A673 (cell line): ENCODE measurements at regions of chr14 and their contacts with region 1.

Region 1: GRCh38 chr14:68341411-68342212 is 451.3 kb downstream of the ZFP36L1 start:
- DNase-seq: peak; percentile 61
- H3K4me3 ChIP-seq: no peak overlapping the region
- H3K27ac ChIP-seq: peak overlapping the region; percentile 26
- H3K4me1 ChIP-seq: peaks cover 20% of the 10 kb centered on the region
- H3K27me3 ChIP-seq: no peaks in the 10 kb centered on the region
- CTCF ChIP-seq: no peak

Region 2: GRCh38 chr14:69055999-69056788 is 714.6 kb after region 1 on chr14:
- CTCF ChIA-PET with region 1: no interaction called
- POLR2A ChIA-PET with region 1: interaction called, 15 read pairs
- intact Hi-C with region 1: no loop called
- DNase-seq: peak; percentile 37
- H3K4me3 ChIP-seq: no peak overlapping the region
- H3K27ac ChIP-seq: no peak overlapping the region
- H3K4me1 ChIP-seq: peaks cover 6% of the 10 kb centered on the region
- H3K27me3 ChIP-seq: no peaks in the 10 kb centered on the region
- CTCF ChIP-seq: peak; percentile 35; the same call in 1 of the 2 replicates